Caco-2 (cell line): ENCODE measurements at regions of chr1 and their contacts with region 1.

Region 1: GRCh38 chr1:183699616-183700160 is 46.6 kb upstream of the APOBEC4 start:
- DNase-seq: peak; percentile 90 to 91
- H3K4me3 ChIP-seq: no peak overlapping the region
- H3K4me3 Mint-ChIP-seq: peak overlapping the region; percentile 70
- H3K27ac Mint-ChIP-seq: peak overlapping the region; percentile 93
- H3K4me1 ChIP-seq: peaks cover 61% of the 10 kb centered on the region
- H3K4me1 Mint-ChIP-seq: peaks cover 41% of the 10 kb centered on the region
- H3K27me3 ChIP-seq: no peaks in the 10 kb centered on the region
- H3K27me3 Mint-ChIP-seq: no peaks in the 10 kb centered on the region
- CTCF ChIP-seq: no peak

Region 2: DNA sequence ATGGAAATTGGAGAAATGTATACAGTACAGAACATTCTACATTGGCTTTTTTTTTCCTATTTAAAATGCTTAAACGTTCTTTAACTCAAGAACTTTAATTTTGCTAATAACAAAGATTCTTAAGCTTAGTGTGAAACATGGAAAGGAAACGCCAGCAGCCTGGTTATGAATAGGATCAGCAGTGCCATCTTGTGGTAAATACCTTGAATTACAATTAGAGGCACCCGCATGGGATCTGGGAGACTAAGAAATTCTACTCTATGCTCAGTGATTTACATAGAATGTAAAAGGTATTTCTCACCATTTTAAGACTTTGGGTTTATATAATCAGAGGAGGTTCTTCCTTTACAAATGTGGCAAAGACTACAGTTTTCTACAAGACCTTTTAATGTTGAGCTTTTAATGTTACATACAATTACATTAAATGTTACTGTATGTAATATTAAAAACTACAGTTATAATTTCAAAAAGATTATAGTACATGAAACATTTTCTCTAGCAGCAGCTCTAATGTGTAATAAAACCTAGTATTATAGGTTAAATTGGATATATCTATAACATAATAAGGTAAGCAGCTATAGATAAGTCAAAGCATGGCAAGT is 14.5 kb before region 1 on chr1:
- CTCF ChIA-PET with region 1: interaction called, 20 read pairs
- POLR2A ChIA-PET with region 1: interaction called, 3 read pairs
- intact Hi-C with region 1: loop called (anchors 2 kb)
- DNase-seq: peak in 1 of 2 experiments; percentile 64
- H3K4me3 ChIP-seq: no peak overlapping the region
- H3K4me3 Mint-ChIP-seq: no peak overlapping the region
- H3K27ac Mint-ChIP-seq: no peak overlapping the region
- H3K4me1 ChIP-seq: peaks cover 9% of the 10 kb centered on the region; the same call in 1 of the 2 replicates
- H3K4me1 Mint-ChIP-seq: peaks cover 13% of the 10 kb centered on the region
- H3K27me3 ChIP-seq: no peaks in the 10 kb centered on the region
- H3K27me3 Mint-ChIP-seq: no peaks in the 10 kb centered on the region
- CTCF ChIP-seq: peak; percentile 60 to 80

Region 3: DNA sequence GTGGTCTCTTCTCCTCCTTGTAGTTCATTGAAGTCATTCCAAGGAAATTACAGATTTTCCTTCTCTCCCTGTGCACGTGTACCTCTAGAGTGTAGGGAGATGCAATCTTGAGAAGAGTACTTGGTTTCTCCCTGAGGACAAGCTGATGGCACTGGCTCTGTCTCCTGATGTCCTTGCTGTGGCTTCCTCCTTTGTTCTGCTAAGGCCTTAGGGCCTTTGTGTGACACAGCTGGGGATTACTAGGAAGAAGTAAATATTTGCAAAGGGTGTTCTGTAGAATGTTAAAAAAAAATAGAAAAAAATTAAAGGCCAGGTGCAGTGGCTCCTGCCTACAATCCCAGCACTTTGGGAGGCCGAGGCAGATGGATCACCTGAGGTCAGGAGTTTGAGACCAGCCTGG is 19.6 kb after region 1 on chr1:
- CTCF ChIA-PET with region 1: no interaction called
- POLR2A ChIA-PET with region 1: no interaction called
- intact Hi-C with region 1: loop called (anchors 1 kb)
- DNase-seq: peak; percentile 77 to 84
- H3K4me3 ChIP-seq: no peak overlapping the region
- H3K4me3 Mint-ChIP-seq: peak overlapping the region; percentile 37
- H3K27ac Mint-ChIP-seq: no peak overlapping the region
- H3K4me1 ChIP-seq: peaks cover 37% of the 10 kb centered on the region
- H3K4me1 Mint-ChIP-seq: peaks cover 16% of the 10 kb centered on the region
- H3K27me3 ChIP-seq: no peaks in the 10 kb centered on the region
- H3K27me3 Mint-ChIP-seq: no peaks in the 10 kb centered on the region
- CTCF ChIP-seq: no peak

Region 4: GRCh38 chr1:183792300-183792699 is 92.6 kb after region 1 on chr1:
- CTCF ChIA-PET with region 1: no interaction called
- POLR2A ChIA-PET with region 1: no interaction called
- intact Hi-C with region 1: loop called (anchors 5 kb)
- DNase-seq: no peak
- H3K4me3 ChIP-seq: no peak overlapping the region
- H3K4me3 Mint-ChIP-seq: no peak overlapping the region
- H3K27ac Mint-ChIP-seq: no peak overlapping the region
- H3K4me1 ChIP-seq: peaks cover 15% of the 10 kb centered on the region
- H3K4me1 Mint-ChIP-seq: peaks cover 27% of the 10 kb centered on the region
- H3K27me3 ChIP-seq: no peaks in the 10 kb centered on the region
- H3K27me3 Mint-ChIP-seq: no peaks in the 10 kb centered on the region
- CTCF ChIP-seq: no peak

Region 5: GRCh38 chr1:183812686-183813569 is 113.2 kb after region 1 on chr1:
- CTCF ChIA-PET with region 1: no interaction called
- POLR2A ChIA-PET with region 1: no interaction called
- intact Hi-C with region 1: loop called (anchors 2 kb)
- DNase-seq: peak; percentile 68 to 84
- H3K4me3 ChIP-seq: peak overlapping the region; percentile 4
- H3K4me3 Mint-ChIP-seq: peak overlapping the region; percentile 76
- H3K27ac Mint-ChIP-seq: peak overlapping the region; percentile 84
- H3K4me1 ChIP-seq: peaks cover 67% of the 10 kb centered on the region
- H3K4me1 Mint-ChIP-seq: peaks cover 49% of the 10 kb centered on the region
- H3K27me3 ChIP-seq: no peaks in the 10 kb centered on the region
- H3K27me3 Mint-ChIP-seq: no peaks in the 10 kb centered on the region
- CTCF ChIP-seq: no peak

Region 6: DNA sequence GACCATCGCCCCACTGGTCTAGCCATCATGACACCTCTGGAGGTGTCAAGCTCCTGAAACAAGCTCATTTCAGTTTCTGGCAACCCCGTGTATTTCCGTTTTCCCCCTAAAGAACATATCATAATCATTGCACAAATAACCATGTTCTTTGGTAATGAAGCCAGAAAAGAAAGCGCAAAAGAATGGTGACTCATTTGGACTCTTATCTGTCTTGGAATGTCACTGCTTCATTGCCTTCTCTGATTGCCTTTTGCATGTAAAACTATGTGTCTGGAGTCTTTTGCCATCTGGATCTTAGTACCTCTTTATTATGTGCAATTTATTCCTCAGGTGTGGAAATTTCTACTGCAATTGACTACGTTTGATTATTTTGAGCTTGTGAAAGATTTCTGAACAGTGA is 227.3 kb after region 1 on chr1:
- CTCF ChIA-PET with region 1: no interaction called
- POLR2A ChIA-PET with region 1: no interaction called
- intact Hi-C with region 1: loop called (anchors 1 kb)
- DNase-seq: peak in 1 of 2 experiments; percentile 40
- H3K4me3 ChIP-seq: no peak overlapping the region
- H3K4me3 Mint-ChIP-seq: peak overlapping the region; percentile 52
- H3K27ac Mint-ChIP-seq: peak overlapping the region; percentile 86
- H3K4me1 ChIP-seq: peaks cover 27% of the 10 kb centered on the region
- H3K4me1 Mint-ChIP-seq: peaks cover 23% of the 10 kb centered on the region
- H3K27me3 ChIP-seq: no peaks in the 10 kb centered on the region
- H3K27me3 Mint-ChIP-seq: no peaks in the 10 kb centered on the region
- CTCF ChIP-seq: no peak

Region 7: DNA sequence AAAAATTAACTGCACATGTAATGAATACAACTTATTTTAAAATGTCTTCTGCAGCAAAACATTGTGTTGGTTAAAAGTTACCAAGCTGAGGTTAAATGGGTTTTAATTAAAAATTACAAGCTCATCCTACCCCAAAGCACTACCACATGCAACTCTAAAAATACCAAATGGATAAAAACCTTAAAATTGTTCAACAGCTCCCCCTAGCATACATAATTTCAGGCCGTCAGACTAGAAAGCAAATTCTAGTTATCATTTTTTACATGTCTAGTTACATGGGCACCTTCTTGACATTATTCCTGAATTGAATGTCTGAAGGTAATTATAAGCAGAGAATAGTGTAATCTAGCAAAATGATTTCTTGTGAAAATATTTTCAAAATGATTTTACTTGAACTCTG is 863.6 kb after region 1 on chr1:
- CTCF ChIA-PET with region 1: no interaction called
- POLR2A ChIA-PET with region 1: no interaction called
- intact Hi-C with region 1: loop called (anchors 5 kb)
- DNase-seq: peak in 1 of 2 experiments; percentile 9
- H3K4me3 ChIP-seq: no peak overlapping the region
- H3K4me3 Mint-ChIP-seq: no peak overlapping the region
- H3K27ac Mint-ChIP-seq: no peak overlapping the region
- H3K4me1 ChIP-seq: no peaks in the 10 kb centered on the region
- H3K4me1 Mint-ChIP-seq: no peaks in the 10 kb centered on the region
- H3K27me3 ChIP-seq: no peaks in the 10 kb centered on the region
- H3K27me3 Mint-ChIP-seq: peaks cover 2% of the 10 kb centered on the region
- CTCF ChIP-seq: peak in 1 of 2 experiments; percentile 30